Activated T-helper 2 cell treated with anti-CD3 and anti-CD28 coated beads, Interferon-gamma antibody, Interleukin-2, Interleukin-4, amounts not matched to agents 10 μg/mL and 5 μg/mL and 100 μg/mL, durations not matched to agents 14 hours and 24 hours and 36 hours (primary cell): ENCODE measurements at regions of chr1 and their contacts with region 1.

Region 1: DNA sequence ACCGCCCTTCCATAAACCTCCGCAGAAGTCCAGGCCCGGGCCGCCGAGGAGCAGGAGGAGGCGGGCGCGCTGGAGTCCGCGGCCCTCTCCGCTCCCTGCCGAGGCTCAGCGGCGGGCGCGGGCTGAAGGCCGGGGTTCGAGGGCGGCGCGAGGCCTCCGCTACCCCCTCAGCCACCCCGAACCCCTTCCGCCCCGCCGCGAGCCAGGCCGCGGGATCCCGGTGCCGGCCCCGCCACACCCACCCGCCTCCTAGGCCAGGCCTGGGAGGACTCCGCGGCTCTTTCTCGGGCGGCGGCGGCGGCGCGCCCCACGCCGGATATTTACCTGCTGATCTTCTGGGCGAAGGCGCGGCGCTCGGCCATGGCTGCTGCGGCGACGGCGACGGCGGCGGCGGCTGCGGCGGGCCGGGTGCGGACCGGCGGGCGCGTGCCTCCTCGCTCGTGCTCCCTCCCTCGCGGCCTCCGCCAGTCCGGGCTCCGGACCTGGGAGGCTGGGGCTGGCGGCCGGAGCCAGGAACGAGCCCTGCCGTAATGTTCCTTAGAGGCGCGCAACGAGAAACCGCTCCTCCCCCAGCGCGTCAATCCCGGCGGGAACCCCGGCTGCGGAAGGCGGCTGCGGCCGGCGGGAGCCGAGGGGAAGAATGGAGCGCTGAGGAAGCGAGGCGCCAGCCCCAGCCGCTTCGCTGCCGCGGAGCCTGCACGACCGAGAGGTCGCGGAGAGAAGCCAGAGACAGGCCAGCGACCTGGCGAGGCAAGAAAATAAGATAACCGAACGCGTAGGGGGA is at the start of gene DOCK7:
- DNase-seq: peak; percentile 52
- H3K4me3 Mint-ChIP-seq: peak within 1 kb of the TSS; percentile 86
- H3K27ac Mint-ChIP-seq: peak within 1 kb of the TSS; percentile 74
- H3K4me1 Mint-ChIP-seq: peaks cover 26% of the 10 kb centered on the region
- H3K27me3 Mint-ChIP-seq: no peaks in the 10 kb centered on the region
- total RNA-seq, gene DOCK7: 17.8 and 21.2 TPM in 2 replicates

Region 2: DNA sequence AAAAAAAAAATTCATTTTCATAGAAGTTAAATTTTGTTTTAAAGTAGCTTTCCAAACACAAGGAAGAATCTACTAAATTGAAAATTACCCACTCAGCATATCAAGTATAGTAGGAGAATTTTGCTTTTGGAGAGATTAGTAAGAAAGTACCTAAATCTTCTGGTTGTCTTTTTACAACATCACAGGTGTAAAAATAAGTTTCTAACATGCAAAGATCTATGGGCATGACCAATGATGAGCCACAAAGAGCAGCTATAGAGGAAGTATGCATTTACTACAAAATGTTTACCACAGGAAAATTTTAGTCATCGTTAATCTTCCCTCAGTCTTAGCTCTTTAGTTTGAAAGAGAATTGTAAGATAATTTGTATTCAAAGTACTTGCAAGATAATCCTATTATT is 62.7 kb before region 1 on chr1:
- intact Hi-C with region 1: loop called (anchors 5 kb)
- DNase-seq: no peak
- H3K4me3 Mint-ChIP-seq: no peak overlapping the region
- H3K27ac Mint-ChIP-seq: no peak overlapping the region
- H3K4me1 Mint-ChIP-seq: peaks cover 21% of the 10 kb centered on the region
- H3K27me3 Mint-ChIP-seq: no peaks in the 10 kb centered on the region

Region 3: DNA sequence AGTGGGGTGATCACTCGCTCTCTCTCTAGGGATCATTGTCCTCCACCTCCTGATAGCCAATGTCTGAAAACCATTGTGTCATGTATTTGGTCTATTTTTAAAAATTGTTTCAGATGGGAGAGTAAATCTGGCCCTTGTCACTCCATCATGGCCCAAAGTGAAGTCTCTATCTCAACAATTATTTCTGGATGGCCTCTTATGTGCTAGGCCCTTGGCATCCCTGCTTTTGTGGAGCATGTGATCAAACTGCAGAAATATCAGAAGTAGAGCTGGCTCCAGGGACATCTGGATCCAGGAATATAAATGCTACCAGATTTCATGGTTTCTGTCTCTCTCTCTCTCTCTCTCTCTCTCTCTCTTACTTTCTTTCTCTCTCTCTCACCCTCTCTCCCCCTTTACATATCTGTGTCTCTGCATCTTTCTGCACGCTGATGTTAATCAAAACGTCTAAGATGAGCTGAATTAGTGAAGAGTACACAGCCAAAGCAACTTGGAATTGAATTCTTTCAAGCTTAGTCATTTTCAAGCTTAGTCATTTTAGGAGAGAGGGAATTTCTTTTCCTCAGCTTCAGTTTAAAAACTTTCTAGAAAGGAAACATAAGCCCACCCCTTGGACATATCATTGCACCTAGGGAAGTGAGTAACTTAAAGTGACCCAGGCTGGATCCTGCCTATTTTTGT is 47.5 kb after region 1 on chr1:
- intact Hi-C with region 1: no loop called
- DNase-seq: no peak
- H3K4me3 Mint-ChIP-seq: no peak overlapping the region
- H3K27ac Mint-ChIP-seq: no peak overlapping the region
- H3K4me1 Mint-ChIP-seq: peaks cover 1% of the 10 kb centered on the region
- H3K27me3 Mint-ChIP-seq: peaks cover 18% of the 10 kb centered on the region